Activated naive CD4-positive, alpha-beta T cell treated with anti-CD3 and anti-CD28 coated beads for 36 hours (primary cell): ENCODE measurements at regions of chr13 and their contacts with region 1.

Region 1: GRCh38 chr13:109786457-109787134 is at the start of gene IRS2:
- DNase-seq: peak; percentile 94
- H3K4me3 Mint-ChIP-seq: peak within 1 kb of the TSS; percentile 77
- H3K27ac Mint-ChIP-seq: peak within 1 kb of the TSS; percentile 61
- H3K4me1 Mint-ChIP-seq: peaks cover 19% of the 10 kb centered on the region
- H3K27me3 Mint-ChIP-seq: peaks cover 5% of the 10 kb centered on the region
- total RNA-seq, gene IRS2: 3.0 to 3.3 TPM

Region 2: GRCh38 chr13:108915634-108916512 is 870.7 kb before region 1 on chr13:
- CTCF ChIA-PET with region 1: no interaction called
- intact Hi-C with region 1: loop called (anchors 2 kb)
- DNase-seq: peak; percentile 98
- H3K4me3 Mint-ChIP-seq: peak overlapping the region; percentile 68
- H3K27ac Mint-ChIP-seq: peak overlapping the region; percentile 87
- H3K4me1 Mint-ChIP-seq: peaks cover 20% of the 10 kb centered on the region
- H3K27me3 Mint-ChIP-seq: peaks cover 8% of the 10 kb centered on the region

Region 3: DNA sequence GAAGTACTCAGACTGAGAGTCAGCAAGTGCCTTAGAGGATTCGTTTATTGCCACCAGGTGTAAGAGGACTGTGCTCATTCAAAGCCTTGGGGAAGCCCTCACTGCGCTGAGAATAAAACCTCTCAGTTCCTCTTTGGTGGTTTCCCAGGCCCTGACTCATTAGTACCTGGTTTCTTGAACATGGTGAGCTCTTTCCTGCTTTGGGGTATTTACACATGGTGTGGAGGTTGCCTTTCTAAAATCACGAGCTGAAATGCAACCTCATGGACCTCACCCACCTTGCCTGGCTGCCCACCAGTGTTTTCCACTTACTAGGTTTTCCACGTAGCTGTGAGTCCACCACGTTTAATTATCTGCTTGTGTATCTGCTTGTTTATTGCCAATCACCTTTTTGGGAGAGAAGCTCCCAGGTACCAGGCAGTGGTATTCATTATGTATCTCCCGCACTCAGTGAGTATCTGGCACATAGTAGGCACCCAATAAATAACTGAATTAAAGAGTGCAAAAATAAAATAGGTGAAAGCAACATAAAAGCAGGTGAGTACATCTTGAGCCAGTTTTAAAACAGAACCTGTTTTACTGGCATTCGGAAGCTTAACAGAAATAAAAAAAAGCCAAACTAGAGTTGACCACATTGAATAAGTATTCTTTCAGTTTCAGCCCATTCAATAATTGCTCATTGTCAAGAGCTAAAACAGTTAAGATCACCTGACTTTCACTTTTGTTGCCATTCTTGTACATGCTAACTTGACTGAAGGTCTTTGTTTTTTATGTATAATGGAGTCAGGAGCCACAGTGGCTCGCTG is 624.1 kb before region 1 on chr13:
- CTCF ChIA-PET with region 1: no interaction called
- intact Hi-C with region 1: loop called (anchors 1 kb)
- DNase-seq: peak; percentile 84
- H3K4me3 Mint-ChIP-seq: no peak overlapping the region
- H3K27ac Mint-ChIP-seq: no peak overlapping the region
- H3K4me1 Mint-ChIP-seq: peaks cover 11% of the 10 kb centered on the region
- H3K27me3 Mint-ChIP-seq: peaks cover 39% of the 10 kb centered on the region

Region 4: DNA sequence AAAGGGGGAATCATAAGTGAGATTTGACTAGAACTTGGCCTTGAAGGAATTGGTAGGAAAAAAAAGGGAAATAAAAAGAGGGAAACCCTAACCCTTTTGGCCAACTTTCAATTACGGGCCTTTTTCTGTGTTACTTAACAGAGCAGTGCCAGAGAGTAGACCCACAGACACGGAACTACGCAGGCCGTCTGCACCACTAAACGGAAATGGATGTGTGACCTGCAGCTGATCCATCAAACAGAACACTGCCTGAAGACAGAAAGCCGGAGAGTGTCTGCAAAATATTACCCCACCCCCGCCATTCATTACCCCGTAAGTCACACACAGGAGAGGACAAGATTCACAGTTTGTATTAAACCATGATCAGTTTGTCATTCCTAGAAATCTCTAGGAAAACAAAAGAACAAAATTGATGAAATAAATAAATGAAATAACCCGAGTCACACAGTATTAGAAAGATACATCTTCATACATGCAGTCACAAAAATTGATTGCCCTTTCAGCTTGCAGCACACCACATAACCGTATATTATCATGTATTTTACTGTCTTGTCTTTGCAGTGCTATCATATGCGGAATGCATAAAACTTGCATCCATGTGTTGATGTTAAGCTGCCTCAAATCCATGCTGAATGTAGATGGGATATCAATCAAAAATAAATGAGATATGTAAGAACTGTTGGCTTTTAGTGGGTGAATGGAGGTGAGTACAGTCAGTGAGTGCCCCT is 424.9 kb before region 1 on chr13:
- CTCF ChIA-PET with region 1: no interaction called
- intact Hi-C with region 1: no loop called
- DNase-seq: no peak
- H3K4me3 Mint-ChIP-seq: no peak overlapping the region
- H3K27ac Mint-ChIP-seq: no peak overlapping the region
- H3K4me1 Mint-ChIP-seq: no peaks in the 10 kb centered on the region
- H3K27me3 Mint-ChIP-seq: peaks cover 3% of the 10 kb centered on the region

Region 5: DNA sequence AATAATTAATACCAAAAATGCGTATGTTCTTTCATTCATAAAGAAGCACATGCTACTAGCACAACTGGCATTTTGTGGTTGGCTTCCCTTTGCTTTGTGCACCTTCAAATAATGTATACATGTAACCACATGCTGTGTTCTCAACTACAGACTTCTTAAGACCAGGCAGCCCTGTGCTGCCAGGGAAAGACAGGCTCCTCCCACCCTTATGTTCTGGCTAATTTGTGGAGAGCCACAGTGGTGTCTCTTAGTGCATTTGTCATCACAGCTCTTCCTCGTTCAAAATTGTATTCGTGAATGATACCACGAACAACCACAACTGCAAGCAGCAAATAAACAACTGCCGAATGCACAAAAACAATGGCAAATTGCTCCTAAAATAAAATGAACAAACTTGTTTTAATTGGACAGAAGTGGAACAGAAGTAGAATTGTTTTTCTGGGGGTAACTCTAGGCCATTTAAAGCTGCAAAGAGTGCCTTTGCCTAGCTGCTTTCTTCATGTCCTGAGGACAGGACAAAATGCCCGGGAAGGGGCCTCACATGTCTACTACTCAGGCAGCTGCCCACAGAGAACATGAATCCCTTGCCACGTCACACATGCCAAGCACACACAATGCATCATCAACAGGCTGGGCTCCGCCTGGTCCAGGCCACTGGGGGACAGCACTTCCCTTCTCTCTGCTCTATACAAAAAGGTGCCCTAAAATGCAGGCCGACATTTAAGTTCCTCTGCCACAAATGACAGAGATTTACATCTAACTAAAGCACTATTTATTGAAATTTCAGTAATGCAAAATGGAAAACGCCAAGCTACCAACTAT is 21.9 kb before region 1 on chr13:
- CTCF ChIA-PET with region 1: interaction called, 5 read pairs
- intact Hi-C with region 1: loop called (anchors 1 kb)
- DNase-seq: peak; percentile 55
- H3K4me3 Mint-ChIP-seq: no peak overlapping the region
- H3K27ac Mint-ChIP-seq: no peak overlapping the region
- H3K4me1 Mint-ChIP-seq: peaks cover 37% of the 10 kb centered on the region
- H3K27me3 Mint-ChIP-seq: no peaks in the 10 kb centered on the region

Region 6: GRCh38 chr13:110340812-110341444 is 554.3 kb after region 1 on chr13:
- CTCF ChIA-PET with region 1: no interaction called
- intact Hi-C with region 1: loop called (anchors 5 kb)
- DNase-seq: peak; percentile 93
- H3K4me3 Mint-ChIP-seq: peak overlapping the region; percentile 23
- H3K27ac Mint-ChIP-seq: peak overlapping the region; percentile 68
- H3K4me1 Mint-ChIP-seq: peaks cover 32% of the 10 kb centered on the region
- H3K27me3 Mint-ChIP-seq: peaks cover 14% of the 10 kb centered on the region